Right ventricle myocardium superior (tissue), 1 donor: ENCODE measurements at regions of chr13 and their contacts with region 1.

Region 1: DNA sequence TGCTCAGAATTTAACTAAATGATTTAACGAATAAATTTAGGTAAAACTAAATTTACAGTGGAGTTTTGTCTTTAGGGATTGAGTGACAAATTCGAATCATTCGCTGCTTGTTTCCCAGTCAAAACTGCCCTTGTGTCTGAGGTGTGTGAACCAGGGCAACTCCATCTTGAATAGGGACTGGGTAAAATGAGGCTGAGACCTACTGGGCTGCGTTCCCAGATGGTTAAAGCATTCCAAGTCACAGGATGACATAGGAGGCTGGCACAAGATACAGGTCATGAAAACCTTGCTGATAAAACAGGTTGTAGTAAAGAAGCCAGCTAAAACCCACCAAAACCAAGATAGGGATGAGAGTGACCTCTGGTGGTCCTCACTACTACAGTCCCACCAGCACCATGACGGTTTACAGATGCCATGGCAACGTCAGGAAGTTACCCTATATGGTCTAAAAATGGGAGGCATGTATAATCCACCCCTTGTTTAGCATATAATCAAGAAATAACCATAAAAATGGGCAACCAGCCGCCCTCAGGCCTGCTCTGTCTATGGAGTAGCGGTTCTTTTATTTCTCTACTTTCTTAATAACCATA is 10.2 kb upstream of the ANKRD10 start:
- DNase-seq: no peak
- ATAC-seq: no peak

Region 2: GRCh38 chr13:111046590-111047141 is 121.5 kb after region 1 on chr13:
- intact Hi-C with region 1: loop called (anchors 10 kb)
- DNase-seq: no peak
- ATAC-seq: peak; percentile 44